AG04450 (cell line): ENCODE measurements at regions of chr17 and their contacts with region 1.

Region 1: DNA sequence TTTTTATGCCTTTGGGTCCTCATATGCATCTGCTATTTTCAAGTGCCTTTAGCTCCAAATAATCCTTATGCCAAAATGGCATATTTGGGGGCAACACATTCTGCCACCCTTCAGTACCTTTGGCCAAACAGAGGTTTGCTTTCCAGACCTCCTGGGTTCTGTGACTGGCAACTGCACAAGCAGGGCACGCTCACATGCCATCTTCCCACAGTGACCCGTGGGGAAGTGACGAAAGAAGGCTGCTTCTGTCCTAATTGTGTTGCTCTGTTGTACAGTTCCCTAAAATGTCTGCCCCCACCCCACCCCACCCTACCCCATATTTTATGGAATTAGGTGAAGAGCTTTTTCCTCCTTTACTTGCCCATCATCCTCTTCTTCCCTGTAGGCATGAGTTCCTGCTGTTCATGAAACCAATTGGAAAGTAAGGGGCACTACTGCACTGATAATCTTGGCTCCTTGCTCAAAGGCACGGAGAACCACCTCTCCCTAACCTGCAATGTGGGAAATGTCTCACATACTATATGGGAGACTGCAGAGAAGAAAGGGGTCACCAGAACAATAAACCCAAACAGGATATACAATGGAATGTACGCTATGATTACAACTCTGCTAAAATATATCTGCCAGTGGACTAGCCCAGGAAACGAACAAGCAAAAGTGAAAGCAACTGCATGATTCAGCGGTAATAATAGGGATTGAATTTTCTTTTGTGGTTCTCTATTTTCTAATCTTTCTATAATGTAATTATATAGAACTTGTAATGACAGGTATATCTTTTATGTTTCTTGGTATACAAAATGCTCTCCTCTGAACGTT is 3.3 kb upstream of the SLFN12L start:
- DNase-seq: no peak
- H3K4me3 ChIP-seq: peak overlapping the region; percentile 37
- H3K27ac ChIP-seq: no peak overlapping the region
- H3K27me3 ChIP-seq: no peaks in the 10 kb centered on the region
- CTCF ChIP-seq: 0 out of 2 replicates have a peak, but pooled peaks have one; percentile 8

Region 2: GRCh38 chr17:35554668-35555067 is 13.9 kb after region 1 on chr17:
- CTCF ChIA-PET with region 1: interaction called, 26 read pairs
- POLR2A ChIA-PET with region 1: no interaction called
- DNase-seq: no peak
- H3K4me3 ChIP-seq: no peak overlapping the region
- H3K27ac ChIP-seq: no peak overlapping the region
- H3K27me3 ChIP-seq: peaks cover 17% of the 10 kb centered on the region
- CTCF ChIP-seq: no peak

Region 3: GRCh38 chr17:35578197-35578928 is 37.6 kb after region 1 on chr17 and contains the start of gene PEX12:
- CTCF ChIA-PET with region 1: interaction called, 10 read pairs
- POLR2A ChIA-PET with region 1: no interaction called
- DNase-seq: no peak
- H3K4me3 ChIP-seq: peak within 1 kb of the TSS; percentile 81
- H3K27ac ChIP-seq: peak within 1 kb of the TSS; percentile 74
- H3K27me3 ChIP-seq: no peaks in the 10 kb centered on the region
- CTCF ChIP-seq: no peak
- polyA plus RNA-seq, gene PEX12: 8.3 and 10.2 TPM in 2 replicates

Region 4: GRCh38 chr17:35587074-35587971 is 46.5 kb after region 1 on chr17 and contains the start of gene AP2B1:
- CTCF ChIA-PET with region 1: interaction called, 10 read pairs
- POLR2A ChIA-PET with region 1: no interaction called
- DNase-seq: peak; percentile 92
- H3K4me3 ChIP-seq: peak within 1 kb of the TSS; percentile 99
- H3K27ac ChIP-seq: peak within 1 kb of the TSS; percentile 97
- H3K27me3 ChIP-seq: peaks cover 2% of the 10 kb centered on the region
- CTCF ChIP-seq: no peak
- polyA plus RNA-seq, gene AP2B1: 234 and 258 TPM in 2 replicates

Region 5: GRCh38 chr17:35653619-35654361 is 113.0 kb after region 1 on chr17:
- CTCF ChIA-PET with region 1: no interaction called
- POLR2A ChIA-PET with region 1: no interaction called
- DNase-seq: no peak
- H3K4me3 ChIP-seq: no peak overlapping the region
- H3K27ac ChIP-seq: no peak overlapping the region
- H3K27me3 ChIP-seq: no peaks in the 10 kb centered on the region
- CTCF ChIP-seq: no peak